Aorta (tissue), 5 donors: ENCODE measurements at regions of chr14 and their contacts with region 1.

Region 1: GRCh38 chr14:105020815-105021655 is at the start of gene CDCA4:
- DNase-seq: peak; percentile 98 to 99
- ATAC-seq: peak; percentile 98
- H3K4me3 ChIP-seq: peak within 1 kb of the TSS; percentile 71 to 87
- H3K27ac ChIP-seq: peak within 1 kb of the TSS in 1 of 2 donors; percentile 42
- H3K4me1 ChIP-seq: no peaks in the 10 kb centered on the region
- H3K27me3 ChIP-seq: no peaks in the 10 kb centered on the region
- total RNA-seq, gene CDCA4: 4.1 to 5.9 TPM

Region 2: GRCh38 chr14:104976198-104977007 is 44.6 kb before region 1 on chr14:
- intact Hi-C with region 1: loop called (anchors 2 to 5 kb)
- DNase-seq: peak; percentile 91 to 94
- ATAC-seq: no peak
- H3K4me3 ChIP-seq: no peak overlapping the region
- H3K27ac ChIP-seq: no peak overlapping the region
- H3K4me1 ChIP-seq: no peaks in the 10 kb centered on the region
- H3K27me3 ChIP-seq: no peaks in the 10 kb centered on the region